Activated CD8-positive, alpha-beta T cell treated with anti-CD3 and anti-CD28 coated beads, Interleukin-2, amount 10 ng/mL, durations not matched to agents 7 days and 5 days (primary cell): ENCODE measurements at regions of chr10 and their contacts with region 1.

Region 1: GRCh38 chr10:8331883-8332729 is 277.6 kb downstream of the GATA3 start:
- DNase-seq: peak; percentile 92
- ATAC-seq: peak; percentile 96
- H3K4me3 Mint-ChIP-seq: peak overlapping the region; percentile 75
- H3K27ac Mint-ChIP-seq: peak overlapping the region; percentile 88
- H3K4me1 Mint-ChIP-seq: peaks cover 52% of the 10 kb centered on the region
- H3K27me3 Mint-ChIP-seq: no peaks in the 10 kb centered on the region

Region 2: DNA sequence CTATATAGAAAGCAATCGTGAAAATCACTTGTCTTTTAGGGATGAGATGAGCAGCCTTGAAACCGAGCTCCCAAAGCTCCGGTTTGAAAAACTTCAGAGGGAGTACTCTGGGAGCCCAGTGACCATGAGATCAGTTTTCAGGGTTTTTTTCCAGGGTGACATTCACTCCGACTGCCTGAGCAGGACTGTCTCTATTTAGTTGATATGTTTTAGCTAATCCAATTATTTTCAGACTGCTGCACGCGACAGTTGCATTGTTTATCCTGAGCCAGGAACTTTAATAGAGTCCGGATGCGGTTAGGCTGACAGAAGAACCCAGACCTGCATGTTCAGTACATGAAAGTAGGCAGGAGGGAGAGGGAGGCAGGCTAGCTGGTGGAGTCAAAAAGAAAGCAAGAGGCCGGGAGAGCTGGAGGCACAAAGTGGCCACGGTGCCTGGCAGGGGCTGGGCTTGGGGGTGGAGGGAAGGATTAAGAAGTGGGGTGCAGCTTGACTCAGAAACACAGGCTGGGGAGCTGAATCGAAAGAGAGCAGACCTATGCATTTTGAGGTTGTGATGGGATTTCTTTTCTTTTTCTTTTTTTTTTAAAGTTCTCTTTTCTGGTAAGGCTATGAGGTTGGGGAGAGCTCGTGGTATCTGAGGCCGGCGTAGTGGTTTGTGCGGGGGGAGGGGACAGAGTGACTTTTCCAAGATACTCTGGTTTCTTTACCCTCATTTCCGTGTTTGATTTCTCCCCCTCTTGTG is 272.0 kb before region 1 on chr10:
- CTCF ChIA-PET with region 1: interaction called, 8 read pairs
- POLR2A ChIA-PET with region 1: interaction called, 24 read pairs
- DNase-seq: peak; percentile 85
- ATAC-seq: peak; percentile 50
- H3K4me3 Mint-ChIP-seq: peak overlapping the region; percentile 97
- H3K27ac Mint-ChIP-seq: peak overlapping the region; percentile 97
- H3K4me1 Mint-ChIP-seq: peaks cover 77% of the 10 kb centered on the region
- H3K27me3 Mint-ChIP-seq: no peaks in the 10 kb centered on the region

Region 3: GRCh38 chr10:8245131-8245813 is 86.8 kb before region 1 on chr10:
- CTCF ChIA-PET with region 1: no interaction called
- POLR2A ChIA-PET with region 1: interaction called, 10 read pairs
- DNase-seq: peak; percentile 49
- ATAC-seq: peak; percentile 87
- H3K4me3 Mint-ChIP-seq: peak overlapping the region; percentile 72
- H3K27ac Mint-ChIP-seq: peak overlapping the region; percentile 91
- H3K4me1 Mint-ChIP-seq: peaks cover 74% of the 10 kb centered on the region
- H3K27me3 Mint-ChIP-seq: no peaks in the 10 kb centered on the region

Region 4: DNA sequence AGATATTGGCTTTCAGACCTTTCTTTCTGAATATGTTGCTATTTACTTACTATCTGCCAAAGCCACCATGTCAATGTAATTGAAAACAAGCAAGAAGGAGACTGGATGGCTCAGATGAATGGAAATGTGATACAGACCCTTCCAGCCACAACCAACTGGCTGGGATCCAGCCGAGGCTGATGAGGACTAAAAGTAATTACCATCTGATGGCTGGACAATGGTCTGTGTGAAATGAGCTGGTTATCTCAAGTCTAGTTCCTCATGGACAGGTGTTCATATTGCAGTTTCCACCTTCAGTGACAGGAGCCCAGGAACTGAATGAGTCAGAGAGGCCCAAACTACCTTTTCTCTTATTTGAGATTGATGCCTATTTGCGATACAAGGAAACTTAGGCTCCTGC is 10.1 kb before region 1 on chr10:
- CTCF ChIA-PET with region 1: no interaction called
- POLR2A ChIA-PET with region 1: no interaction called
- DNase-seq: no peak
- ATAC-seq: no peak
- H3K4me3 Mint-ChIP-seq: no peak overlapping the region
- H3K27ac Mint-ChIP-seq: no peak overlapping the region
- H3K4me1 Mint-ChIP-seq: peaks cover 17% of the 10 kb centered on the region
- H3K27me3 Mint-ChIP-seq: peaks cover 5% of the 10 kb centered on the region

Region 5: DNA sequence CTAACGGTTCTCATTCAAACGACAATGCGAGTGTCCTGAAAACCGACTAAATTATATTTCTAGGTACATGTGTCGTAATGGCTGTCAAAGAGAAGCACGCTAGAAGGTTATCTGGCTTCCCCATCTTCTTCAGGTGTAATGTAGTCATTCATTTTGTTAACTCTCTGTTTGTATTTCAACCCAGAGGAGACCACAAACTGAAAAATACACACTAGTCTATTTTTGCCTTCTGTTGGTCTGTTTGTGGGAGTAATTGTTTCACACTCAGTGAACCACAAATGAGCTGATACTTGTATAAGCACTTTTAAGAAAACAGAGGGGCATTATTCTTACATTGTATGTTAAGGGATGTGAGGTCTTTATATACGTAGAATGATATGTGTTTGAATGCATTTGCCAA is 28.3 kb after region 1 on chr10:
- CTCF ChIA-PET with region 1: interaction called, 14 read pairs
- POLR2A ChIA-PET with region 1: interaction called, 20 read pairs
- DNase-seq: no peak
- ATAC-seq: no peak
- H3K4me3 Mint-ChIP-seq: no peak overlapping the region
- H3K27ac Mint-ChIP-seq: peak overlapping the region; percentile 65
- H3K4me1 Mint-ChIP-seq: peaks cover 48% of the 10 kb centered on the region
- H3K27me3 Mint-ChIP-seq: peaks cover 3% of the 10 kb centered on the region

Region 6: GRCh38 chr10:8404391-8405120 is 72.5 kb after region 1 on chr10:
- CTCF ChIA-PET with region 1: interaction called, 5 read pairs
- POLR2A ChIA-PET with region 1: interaction called, 15 read pairs
- DNase-seq: peak; percentile 82
- ATAC-seq: peak; percentile 64
- H3K4me3 Mint-ChIP-seq: peak overlapping the region; percentile 74
- H3K27ac Mint-ChIP-seq: peak overlapping the region; percentile 83
- H3K4me1 Mint-ChIP-seq: peaks cover 80% of the 10 kb centered on the region
- H3K27me3 Mint-ChIP-seq: no peaks in the 10 kb centered on the region

Region 7: DNA sequence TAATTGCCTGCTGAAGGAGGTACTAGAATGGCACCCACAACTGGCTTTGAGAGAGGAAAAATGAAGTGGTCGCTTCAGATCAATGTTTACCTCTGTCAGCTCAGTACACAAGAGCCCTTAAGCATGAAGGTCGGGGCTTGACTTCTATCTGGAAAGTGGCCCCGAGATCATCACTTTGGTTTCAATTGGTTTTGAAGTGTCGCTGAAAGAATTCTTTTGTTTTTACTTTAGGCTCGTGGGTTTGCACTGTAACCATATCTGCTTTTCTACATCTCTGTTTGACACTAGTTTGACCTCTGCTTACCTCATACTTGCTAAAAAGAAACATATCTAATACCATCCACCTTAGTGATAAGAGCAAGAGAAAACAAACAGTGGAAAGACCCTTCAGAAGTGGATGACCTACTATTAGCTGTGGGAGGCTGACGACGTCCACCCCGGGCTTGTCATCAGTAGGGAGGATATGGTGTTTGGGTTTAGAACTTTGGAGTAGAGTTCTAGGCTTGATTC is 84.1 kb after region 1 on chr10:
- CTCF ChIA-PET with region 1: interaction called, 4 read pairs
- POLR2A ChIA-PET with region 1: interaction called, 10 read pairs
- DNase-seq: peak; percentile 50
- ATAC-seq: peak; percentile 90
- H3K4me3 Mint-ChIP-seq: no peak overlapping the region
- H3K27ac Mint-ChIP-seq: peak overlapping the region; percentile 69
- H3K4me1 Mint-ChIP-seq: peaks cover 45% of the 10 kb centered on the region
- H3K27me3 Mint-ChIP-seq: peaks cover 4% of the 10 kb centered on the region